CD4-positive, alpha-beta T cell (primary cell): ENCODE measurements at regions of chr1 and their contacts with region 1.

Region 1: DNA sequence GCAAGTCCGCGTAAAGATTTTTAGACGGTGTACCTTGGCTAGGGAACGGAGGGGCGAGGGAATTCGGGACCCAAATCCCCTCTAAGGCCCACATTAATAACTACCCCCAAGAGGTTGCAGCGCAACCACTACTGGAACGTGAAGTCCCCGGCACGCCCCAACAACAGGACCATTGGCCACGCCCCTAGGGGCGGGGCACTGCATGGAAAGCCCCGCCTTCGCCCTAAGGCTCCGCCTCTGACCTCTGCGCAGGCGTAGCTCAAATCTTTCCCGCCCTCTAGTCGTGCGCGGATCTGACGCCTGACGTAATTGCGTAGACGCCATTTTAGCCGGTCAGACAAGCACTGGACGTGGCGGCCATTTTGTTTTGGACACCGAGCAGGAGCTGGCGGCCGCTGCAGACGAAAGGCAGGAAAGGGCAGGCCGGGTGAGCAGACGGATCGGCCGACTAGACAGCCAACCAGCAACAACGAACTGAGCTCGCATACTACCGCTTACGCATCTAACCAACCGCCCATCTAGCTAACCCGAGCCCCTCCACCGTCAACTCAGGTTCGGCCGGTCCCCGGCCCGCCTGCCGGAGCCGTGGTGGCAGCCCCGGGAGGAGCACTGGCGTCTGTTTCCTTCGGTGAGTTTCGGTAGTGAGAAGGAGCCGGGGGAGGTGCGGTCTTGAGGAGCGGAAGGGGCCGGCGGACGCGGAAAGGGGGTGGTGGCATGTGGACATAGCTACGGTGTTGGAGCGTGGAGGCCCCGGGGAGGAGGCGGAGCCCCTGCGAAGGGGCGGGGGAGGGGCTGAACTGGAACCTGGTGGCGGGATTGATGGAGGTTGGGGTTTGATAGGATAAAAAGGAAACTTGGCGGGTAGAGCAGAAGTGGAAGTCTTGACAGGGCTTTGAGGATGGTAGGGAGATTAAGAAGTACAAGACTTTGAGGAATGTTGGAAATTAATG is at the start of gene CHTOP:
- DNase-seq: peak; percentile 90 to 98 (median 95)
- ATAC-seq: peak; percentile 87
- H3K4me3 ChIP-seq: peak within 1 kb of the TSS; percentile 83
- H3K4me3 Mint-ChIP-seq: peak within 1 kb of the TSS; percentile 100
- H3K27ac ChIP-seq: peak within 1 kb of the TSS; percentile 98 to 100
- H3K27ac Mint-ChIP-seq: peak within 1 kb of the TSS; percentile 100
- H3K4me1 ChIP-seq: peaks cover 33% of the 10 kb centered on the region
- H3K4me1 Mint-ChIP-seq: peaks cover 47% of the 10 kb centered on the region
- H3K27me3 ChIP-seq: no peaks in the 10 kb centered on the region
- H3K27me3 Mint-ChIP-seq: no peaks in the 10 kb centered on the region
- CTCF ChIP-seq: no peak
- total RNA-seq, gene CHTOP: 97.1 to 102 TPM

Region 2: DNA sequence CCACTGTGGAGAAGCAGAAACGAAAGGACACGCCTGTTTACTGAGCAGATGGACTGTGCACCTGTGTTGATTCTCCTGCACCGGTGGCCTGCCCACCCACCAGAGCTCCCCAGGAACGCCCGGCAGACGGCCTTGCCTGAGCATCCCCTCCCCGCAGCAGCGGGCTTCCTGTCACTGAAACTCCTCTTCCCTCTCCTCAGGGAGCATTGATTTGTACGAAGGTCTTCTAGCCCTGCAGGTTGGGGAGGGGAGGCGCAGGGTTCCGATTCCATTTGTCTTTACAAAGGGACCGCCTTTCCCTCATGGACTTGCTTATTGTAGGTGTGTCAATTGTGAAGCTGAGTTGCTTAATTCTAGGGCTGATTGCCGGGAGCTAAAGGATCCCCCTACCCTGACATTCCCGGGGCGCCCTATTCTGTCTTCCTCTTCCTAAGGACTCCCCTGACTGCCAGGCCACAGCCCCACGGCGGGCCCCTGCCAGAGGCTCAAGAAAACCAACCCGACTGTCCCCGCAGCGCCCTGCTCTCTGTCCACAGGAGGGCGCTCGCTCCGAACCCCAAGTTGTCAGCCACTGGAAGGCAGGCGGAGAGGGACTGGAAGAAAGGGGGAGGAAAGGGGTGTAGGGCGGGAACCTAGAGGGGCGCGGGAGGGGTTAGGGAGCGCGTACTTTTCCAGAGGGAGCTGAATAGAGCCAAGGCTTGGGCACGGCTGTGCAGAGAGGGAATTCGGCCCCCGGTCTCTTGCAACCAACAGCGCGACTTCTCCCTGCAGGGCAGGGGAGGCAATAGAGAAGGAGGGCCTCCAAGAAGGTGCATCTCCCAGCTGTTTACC is 101.0 kb before region 1 on chr1:
- CTCF ChIA-PET with region 1: interaction called, 4 read pairs
- POLR2A ChIA-PET with region 1: interaction called, 40 read pairs
- intact Hi-C with region 1: no loop called
- DNase-seq: peak; percentile 61 to 89 (median 77)
- ATAC-seq: peak; percentile 32
- H3K4me3 ChIP-seq: peak overlapping the region; percentile 79
- H3K4me3 Mint-ChIP-seq: peak overlapping the region; percentile 97
- H3K27ac ChIP-seq: peak overlapping the region; percentile 87 to 95
- H3K27ac Mint-ChIP-seq: peak overlapping the region; percentile 99
- H3K4me1 ChIP-seq: peaks cover 59% of the 10 kb centered on the region
- H3K4me1 Mint-ChIP-seq: peaks cover 65% of the 10 kb centered on the region
- H3K27me3 ChIP-seq: no peaks in the 10 kb centered on the region
- H3K27me3 Mint-ChIP-seq: no peaks in the 10 kb centered on the region
- CTCF ChIP-seq: peak; percentile 88

Region 3: GRCh38 chr1:153608742-153609584 is 25.0 kb before region 1 on chr1:
- CTCF ChIA-PET with region 1: no interaction called
- POLR2A ChIA-PET with region 1: no interaction called
- intact Hi-C with region 1: no loop called
- DNase-seq: no peak
- ATAC-seq: no peak
- H3K4me3 ChIP-seq: no peak overlapping the region
- H3K4me3 Mint-ChIP-seq: no peak overlapping the region
- H3K27ac ChIP-seq: no peak overlapping the region
- H3K27ac Mint-ChIP-seq: no peak overlapping the region
- H3K4me1 ChIP-seq: no peaks in the 10 kb centered on the region
- H3K4me1 Mint-ChIP-seq: no peaks in the 10 kb centered on the region
- H3K27me3 ChIP-seq: no peaks in the 10 kb centered on the region
- H3K27me3 Mint-ChIP-seq: no peaks in the 10 kb centered on the region
- CTCF ChIP-seq: no peak

Region 4: DNA sequence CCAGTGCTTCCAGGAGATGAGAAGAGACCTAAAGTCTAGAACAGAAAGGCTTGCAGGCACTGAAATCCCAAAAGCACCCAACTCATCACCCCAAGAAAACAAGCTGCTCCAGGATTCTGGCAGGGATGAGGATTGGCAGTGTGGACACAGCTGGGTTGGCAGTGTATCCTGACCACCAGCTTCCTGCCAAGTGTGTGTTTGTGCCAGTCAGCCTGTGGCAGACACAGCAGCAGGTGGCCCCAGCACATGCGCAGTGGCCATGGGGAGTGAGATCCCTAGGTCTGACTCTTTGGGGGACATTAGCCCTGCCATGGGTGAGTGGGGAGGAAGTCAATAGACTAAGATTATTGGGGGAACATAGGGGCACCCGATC is 15.9 kb after region 1 on chr1:
- CTCF ChIA-PET with region 1: interaction called, 3 read pairs
- POLR2A ChIA-PET with region 1: interaction called, 89 read pairs
- intact Hi-C with region 1: loop called in 1 of 2 experiments (anchors 2 kb)
- DNase-seq: peak in 3 of 14 experiments; percentile 3 to 32 (median 23)
- ATAC-seq: peak; percentile 20
- H3K4me3 ChIP-seq: no peak overlapping the region
- H3K4me3 Mint-ChIP-seq: peak overlapping the region; percentile 76
- H3K27ac ChIP-seq: peak overlapping the region in 1 of 2 donors; percentile 14
- H3K27ac Mint-ChIP-seq: peak overlapping the region; percentile 76
- H3K4me1 ChIP-seq: peaks cover 37% of the 10 kb centered on the region
- H3K4me1 Mint-ChIP-seq: peaks cover 47% of the 10 kb centered on the region
- H3K27me3 ChIP-seq: no peaks in the 10 kb centered on the region
- H3K27me3 Mint-ChIP-seq: no peaks in the 10 kb centered on the region
- CTCF ChIP-seq: no peak

Region 5: DNA sequence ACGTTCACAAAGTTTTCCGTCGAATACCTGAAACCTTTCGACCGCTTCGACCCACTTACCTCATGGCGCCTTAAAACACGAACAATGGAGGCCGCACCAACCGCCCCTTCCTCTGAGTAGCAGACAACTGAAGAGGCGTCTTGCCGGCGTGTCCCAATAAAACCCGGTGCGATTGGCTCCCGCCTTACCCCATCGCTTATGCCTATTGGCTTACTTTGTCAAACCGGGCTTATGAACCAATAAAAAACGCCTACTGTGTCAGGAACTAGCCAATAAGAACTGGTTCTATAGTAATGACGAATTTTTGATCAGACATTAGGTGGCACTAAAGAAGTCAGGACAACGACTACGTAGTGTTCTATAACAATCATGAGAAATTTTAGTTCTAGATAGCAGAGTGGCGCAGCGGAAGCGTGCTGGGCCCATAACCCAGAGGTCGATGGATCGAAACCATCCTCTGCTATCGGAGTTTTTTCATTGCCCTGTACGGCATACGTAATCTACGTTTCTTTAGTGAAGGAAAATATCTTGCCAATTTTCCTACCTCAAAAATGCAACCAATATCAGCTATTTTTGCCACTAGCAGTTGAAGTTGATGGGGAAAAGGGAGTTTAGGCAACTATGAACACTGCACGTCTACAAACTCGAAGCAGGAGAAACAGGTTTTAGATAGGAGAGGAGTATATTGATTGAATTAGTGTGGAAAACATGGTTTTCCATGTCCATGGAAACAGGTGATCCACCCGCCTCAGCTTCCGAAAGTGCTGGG is 37.1 kb after region 1 on chr1 and contains the start of gene ILF2:
- CTCF ChIA-PET with region 1: interaction called, 3 read pairs
- POLR2A ChIA-PET with region 1: interaction called, 35 read pairs
- intact Hi-C with region 1: loop called (anchors 2 kb)
- DNase-seq: peak; percentile 94 to 100 (median 97)
- ATAC-seq: peak; percentile 87
- H3K4me3 ChIP-seq: peak within 1 kb of the TSS; percentile 84
- H3K4me3 Mint-ChIP-seq: no peak within 1 kb of the TSS
- H3K27ac ChIP-seq: peak within 1 kb of the TSS; percentile 89 to 91
- H3K27ac Mint-ChIP-seq: no peak within 1 kb of the TSS
- H3K4me1 ChIP-seq: peaks cover 36% of the 10 kb centered on the region
- H3K4me1 Mint-ChIP-seq: peaks cover 25% of the 10 kb centered on the region
- H3K27me3 ChIP-seq: no peaks in the 10 kb centered on the region
- H3K27me3 Mint-ChIP-seq: no peaks in the 10 kb centered on the region
- CTCF ChIP-seq: peak; percentile 28
- total RNA-seq, gene ILF2: 140 to 147 TPM

Region 6: GRCh38 chr1:153727463-153728304 is 93.7 kb after region 1 on chr1 and contains the start of gene INTS3:
- CTCF ChIA-PET with region 1: no interaction called
- POLR2A ChIA-PET with region 1: interaction called, 23 read pairs
- intact Hi-C with region 1: loop called in 1 of 2 experiments (anchors 2 kb)
- DNase-seq: peak; percentile 95 to 100 (median 99)
- ATAC-seq: peak; percentile 99
- H3K4me3 ChIP-seq: peak within 1 kb of the TSS; percentile 71
- H3K4me3 Mint-ChIP-seq: peak within 1 kb of the TSS; percentile 95
- H3K27ac ChIP-seq: peak within 1 kb of the TSS; percentile 91 to 94
- H3K27ac Mint-ChIP-seq: peak within 1 kb of the TSS; percentile 84
- H3K4me1 ChIP-seq: peaks cover 23% of the 10 kb centered on the region
- H3K4me1 Mint-ChIP-seq: peaks cover 29% of the 10 kb centered on the region
- H3K27me3 ChIP-seq: no peaks in the 10 kb centered on the region
- H3K27me3 Mint-ChIP-seq: no peaks in the 10 kb centered on the region
- CTCF ChIP-seq: no peak
- total RNA-seq, gene INTS3: 24.9 to 27.4 TPM